ENCODE measurements at regions of chr16 and their contacts with region 1.

Region 1: DNA sequence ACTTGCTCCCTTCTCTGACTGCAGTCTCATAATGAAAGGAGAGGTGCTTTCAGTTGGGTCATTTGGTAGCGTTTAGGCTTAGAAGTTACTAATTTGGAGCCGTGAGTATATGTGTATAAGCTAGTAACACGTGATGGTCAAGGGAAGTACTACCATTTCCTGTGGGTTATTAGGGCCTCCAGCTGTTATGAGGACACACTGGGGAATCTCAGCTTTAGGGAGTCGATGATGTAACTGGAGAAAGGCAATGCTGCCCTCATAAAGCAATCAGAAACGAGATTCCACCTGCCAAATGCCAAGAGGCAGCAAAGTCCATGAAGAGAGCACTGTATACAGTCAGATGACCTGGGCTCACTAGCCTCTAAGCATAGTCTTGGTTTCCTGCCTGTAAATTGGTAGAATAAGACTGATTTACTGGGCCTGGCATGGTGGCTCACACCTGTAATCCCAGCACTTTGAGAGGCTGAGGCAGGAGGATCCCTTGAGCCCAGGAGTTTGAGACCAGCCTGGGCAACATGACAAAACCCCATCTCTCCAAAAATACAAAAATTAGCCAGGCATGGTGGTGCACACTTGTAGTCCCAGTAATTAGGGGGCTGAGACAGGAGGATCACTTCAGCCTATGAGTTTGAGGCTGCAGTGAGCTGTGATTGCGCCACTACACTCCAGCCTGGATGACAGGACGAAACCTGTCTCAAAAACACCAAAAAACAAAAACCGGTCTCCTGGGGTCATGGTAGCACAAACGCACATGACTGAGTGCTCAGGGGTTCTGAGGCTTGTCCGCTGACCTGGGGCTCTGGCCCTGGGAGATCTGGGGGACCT is 53.0 kb downstream of the SF3B3 start:
- DNase-seq: no peak
- ATAC-seq: no peak

Region 2: GRCh38 chr16:70523076-70523742 is 53.4 kb before region 1 on chr16 and contains the start of gene COG4:
- intact Hi-C with region 1: loop called (anchors 10 kb)
- DNase-seq: peak; percentile 92
- ATAC-seq: peak; percentile 96
- total RNA-seq, gene COG4: 51.0 TPM

Region 3: DNA sequence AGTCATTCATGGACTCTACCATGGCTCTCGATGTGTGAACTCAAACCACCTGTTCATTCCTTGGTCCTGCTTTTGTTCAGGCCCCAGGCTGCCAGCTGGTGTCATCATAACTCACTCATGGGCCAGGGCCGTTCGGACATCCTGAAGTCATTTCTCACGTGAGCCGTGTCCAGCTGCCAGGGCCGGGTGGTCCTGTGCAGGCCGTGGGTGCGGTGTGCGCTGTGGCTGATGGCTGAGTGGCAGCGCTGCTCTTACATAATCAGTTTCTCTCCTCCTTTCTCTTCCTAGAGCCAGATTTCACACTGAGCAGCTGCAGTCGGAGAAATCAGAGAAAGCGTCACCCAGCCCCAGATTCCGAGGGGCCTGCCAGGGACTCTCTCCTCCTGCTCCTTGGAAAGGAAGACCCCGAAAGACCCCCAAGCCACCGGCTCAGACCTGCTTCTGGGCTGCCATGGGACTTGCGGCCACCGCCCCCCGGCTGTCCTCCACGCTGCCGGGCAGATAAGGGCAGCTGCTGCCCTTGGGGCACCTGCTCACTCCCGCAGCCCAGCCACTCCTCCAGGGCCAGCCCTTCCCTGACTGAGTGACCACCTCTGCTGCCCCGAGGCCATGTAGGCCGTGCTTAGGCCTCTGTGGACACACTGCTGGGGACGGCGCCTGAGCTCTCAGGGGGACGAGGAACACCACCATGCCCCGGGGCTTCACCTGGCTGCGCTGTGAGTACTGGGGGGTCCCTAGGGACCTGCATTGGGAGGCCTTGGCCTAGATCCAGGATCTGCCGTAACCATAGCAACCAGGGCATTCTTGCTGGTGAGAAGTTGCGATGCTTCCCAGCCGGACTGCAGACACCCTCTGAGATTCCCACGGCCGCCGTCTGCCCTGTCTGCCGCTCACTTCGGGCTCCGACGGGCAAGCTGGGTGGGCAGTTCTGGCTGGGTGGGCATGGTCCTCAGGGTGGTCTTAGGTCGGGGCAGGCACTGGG is 69.9 kb after region 1 on chr16 and contains the start of gene IL34:
- intact Hi-C with region 1: loop called (anchors 10 kb)
- DNase-seq: peak; percentile 64
- ATAC-seq: peak; percentile 64
- total RNA-seq, gene IL34: 64.0 TPM

Region 4: DNA sequence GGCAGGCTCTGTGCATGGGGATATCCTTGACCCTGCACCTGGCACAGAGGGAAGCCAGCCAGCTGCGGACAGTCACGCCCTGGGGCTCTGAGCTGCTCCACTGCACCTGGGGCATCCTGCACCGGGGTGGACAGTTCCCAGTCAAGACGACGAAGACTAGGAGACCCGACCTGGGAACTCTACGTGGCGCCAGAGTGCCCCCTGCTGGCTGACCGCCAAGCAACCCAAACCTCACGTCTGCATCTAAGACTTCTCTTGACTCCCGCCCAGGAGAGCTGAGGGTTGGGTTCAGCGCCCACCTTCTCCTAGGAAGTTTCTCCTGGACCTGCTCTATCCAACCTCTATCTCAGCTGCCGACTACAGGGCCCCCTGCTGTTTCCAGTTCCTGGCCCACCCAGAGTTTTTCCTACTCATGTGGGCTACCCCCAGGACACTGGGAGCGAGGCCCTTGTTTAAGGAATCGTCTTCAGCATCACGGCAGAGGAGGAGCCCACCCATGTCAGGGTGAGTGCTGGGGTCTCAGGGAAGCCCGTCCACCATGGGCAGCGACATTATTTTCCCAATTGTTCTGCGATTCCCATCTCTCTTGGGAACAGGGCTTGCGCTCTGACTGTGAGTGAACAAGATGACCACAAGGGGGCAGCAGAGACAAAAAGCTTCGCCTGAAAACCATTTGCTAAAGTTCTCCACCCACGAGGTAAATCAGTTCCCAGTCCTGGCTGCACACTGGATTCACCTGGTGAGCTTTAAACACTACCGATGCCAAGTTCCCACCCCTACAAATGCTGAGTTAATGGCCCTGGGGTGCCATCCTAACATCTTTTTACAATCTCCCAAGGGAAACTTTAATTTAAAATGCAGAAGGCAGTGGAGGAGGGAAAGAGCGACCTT is 835.9 kb after region 1 on chr16:
- intact Hi-C with region 1: no loop called
- DNase-seq: peak; percentile 77
- ATAC-seq: peak; percentile 73